Activated CD4-positive, alpha-beta memory T cell treated with anti-CD3 and anti-CD28 coated beads for 36 hours (primary cell): ENCODE measurements at regions of chr15 and their contacts with region 1.

Region 1: GRCh38 chr15:51192521-51193280 is 98.0 kb upstream of the TNFAIP8L3 start:
- DNase-seq: peak; percentile 85
- H3K4me3 Mint-ChIP-seq: no peak overlapping the region
- H3K27ac Mint-ChIP-seq: no peak overlapping the region
- H3K4me1 Mint-ChIP-seq: peaks cover 4% of the 10 kb centered on the region
- H3K27me3 Mint-ChIP-seq: peaks cover 22% of the 10 kb centered on the region

Region 2: DNA sequence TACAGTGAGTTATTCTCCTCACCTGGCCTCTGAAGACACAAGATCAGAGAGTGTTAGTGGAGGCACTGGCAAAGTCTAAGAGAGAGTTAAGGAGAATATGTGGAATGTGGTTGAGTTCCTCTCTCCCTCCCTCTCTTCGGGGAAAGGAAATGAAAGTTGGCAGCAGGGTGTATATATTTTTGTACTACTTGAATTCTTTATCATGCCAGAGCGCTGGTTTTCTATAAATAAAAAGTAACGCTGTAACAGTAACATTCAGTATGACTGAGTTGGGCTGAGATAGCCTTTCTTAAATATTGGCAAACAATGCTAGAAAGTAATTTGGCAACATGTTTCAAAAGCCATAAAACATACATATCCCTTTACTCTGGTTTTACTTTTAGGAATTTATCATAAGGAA is 20.5 kb before region 1 on chr15:
- CTCF ChIA-PET with region 1: interaction called, 20 read pairs
- POLR2A ChIA-PET with region 1: no interaction called
- intact Hi-C with region 1: no loop called
- DNase-seq: no peak
- H3K4me3 Mint-ChIP-seq: no peak overlapping the region
- H3K27ac Mint-ChIP-seq: no peak overlapping the region
- H3K4me1 Mint-ChIP-seq: no peaks in the 10 kb centered on the region
- H3K27me3 Mint-ChIP-seq: peaks cover 6% of the 10 kb centered on the region

Region 3: DNA sequence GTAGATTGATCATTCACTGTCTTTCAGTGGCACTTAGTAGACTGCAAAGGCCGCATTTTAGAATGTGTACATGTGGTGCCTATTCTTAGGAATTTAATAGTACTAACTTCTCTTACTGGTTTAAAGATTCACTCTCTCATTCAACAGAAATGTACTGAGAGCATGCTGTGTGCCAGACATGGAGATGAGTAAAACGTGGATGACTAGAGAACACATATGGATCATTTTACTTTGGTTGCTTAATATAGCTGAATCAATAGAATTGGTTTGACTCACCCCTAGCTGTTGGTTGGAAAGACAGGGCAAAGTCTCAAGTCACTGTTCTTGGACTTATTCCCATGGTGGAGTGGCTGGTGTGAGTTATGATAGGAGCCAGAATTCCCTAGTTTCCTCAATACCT is 11.1 kb after region 1 on chr15:
- CTCF ChIA-PET with region 1: interaction called, 16 read pairs
- POLR2A ChIA-PET with region 1: no interaction called
- intact Hi-C with region 1: no loop called
- DNase-seq: no peak
- H3K4me3 Mint-ChIP-seq: no peak overlapping the region
- H3K27ac Mint-ChIP-seq: no peak overlapping the region
- H3K4me1 Mint-ChIP-seq: no peaks in the 10 kb centered on the region
- H3K27me3 Mint-ChIP-seq: peaks cover 6% of the 10 kb centered on the region